Left ventricle myocardium inferior (tissue), 1 donor: ENCODE measurements at regions of chr3 and their contacts with region 1.

Region 1: GRCh38 chr3:11060500-11061251 is 68.1 kb downstream of the SLC6A1 start:
- DNase-seq: peak; percentile 54
- H3K4me3 ChIP-seq: peak overlapping the region; percentile 42
- H3K27ac ChIP-seq: no peak overlapping the region
- H3K4me1 ChIP-seq: peaks cover 10% of the 10 kb centered on the region
- H3K27me3 ChIP-seq: peaks cover 66% of the 10 kb centered on the region
- CTCF ChIP-seq: peak; percentile 92

Region 2: GRCh38 chr3:10758304-10759061 is 302.2 kb before region 1 on chr3:
- intact Hi-C with region 1: loop called (anchors 10 kb)
- DNase-seq: no peak
- H3K4me3 ChIP-seq: no peak overlapping the region
- H3K27ac ChIP-seq: no peak overlapping the region
- H3K4me1 ChIP-seq: no peaks in the 10 kb centered on the region
- H3K27me3 ChIP-seq: peaks cover 84% of the 10 kb centered on the region
- CTCF ChIP-seq: peak; percentile 71

Region 3: DNA sequence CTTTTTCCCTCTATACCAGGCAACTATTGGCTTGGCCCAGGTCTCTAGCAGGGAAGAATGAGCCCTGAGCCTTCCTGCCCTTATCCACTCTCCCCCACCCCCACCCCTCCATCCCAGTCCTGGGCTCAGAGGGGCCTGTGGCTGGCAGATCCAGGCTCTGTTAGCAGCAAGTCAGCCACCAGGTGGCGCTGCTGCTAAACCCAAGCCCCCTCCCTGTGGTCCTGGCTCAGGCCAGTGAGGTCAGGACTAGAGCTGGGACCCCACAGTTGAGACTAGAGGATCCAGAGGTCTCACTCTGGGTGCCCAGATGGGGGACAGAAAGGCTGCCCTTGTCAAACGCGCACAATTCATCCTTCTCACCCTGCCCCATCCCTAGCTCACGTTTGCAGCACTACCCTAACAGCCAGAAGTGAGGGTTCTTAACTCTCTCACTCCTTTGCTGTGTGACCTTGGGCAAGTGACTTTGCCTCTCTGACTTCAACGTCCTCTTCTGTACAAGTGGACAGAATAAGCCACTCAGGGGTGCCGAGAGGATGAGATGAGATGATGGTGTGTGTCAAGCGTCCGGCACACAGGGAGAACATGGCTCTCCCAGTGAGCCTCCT is 114.9 kb before region 1 on chr3:
- intact Hi-C with region 1: loop called (anchors 2 kb)
- DNase-seq: peak; percentile 49
- H3K4me3 ChIP-seq: no peak overlapping the region
- H3K27ac ChIP-seq: no peak overlapping the region
- H3K4me1 ChIP-seq: peaks cover 9% of the 10 kb centered on the region
- H3K27me3 ChIP-seq: peaks cover 62% of the 10 kb centered on the region
- CTCF ChIP-seq: peak; percentile 88